Right lobe of liver (tissue), 6 donors: ENCODE measurements at regions of chr1 and their contacts with region 1.

Region 1: DNA sequence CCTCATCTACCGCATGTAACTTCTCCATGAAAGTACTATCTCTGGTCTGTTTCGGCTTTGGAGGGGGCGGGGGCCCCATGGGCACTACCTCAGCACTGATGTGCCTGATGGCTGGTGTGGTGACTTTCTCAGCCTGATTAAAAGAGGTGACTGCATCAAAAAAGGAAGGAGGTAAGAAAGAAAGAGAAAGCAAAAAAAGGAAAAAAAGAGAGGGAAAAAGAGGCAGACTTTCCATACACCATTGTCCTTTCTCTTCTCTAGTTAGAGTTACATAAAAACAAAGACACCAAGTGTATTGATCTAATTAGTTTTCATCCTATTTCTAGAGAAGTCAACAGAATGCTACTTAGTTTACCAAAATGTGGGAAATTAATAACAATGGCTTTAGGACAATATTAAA is 43.3 kb downstream of the GON4L start:
- DNase-seq: no peak
- ATAC-seq: no peak
- H3K4me3 ChIP-seq: no peak overlapping the region
- H3K27ac ChIP-seq: no peak overlapping the region
- H3K4me1 ChIP-seq: no peaks in the 10 kb centered on the region
- H3K27me3 ChIP-seq: no peaks in the 10 kb centered on the region
- CTCF ChIP-seq: no peak
- POLR2A ChIP-seq: no peak

Region 2: GRCh38 chr1:155801149-155801548 is 12.5 kb before region 1 on chr1:
- intact Hi-C with region 1: loop called in 1 of 2 experiments (anchors 2 kb)
- DNase-seq: no peak
- ATAC-seq: no peak
- H3K4me3 ChIP-seq: no peak overlapping the region
- H3K27ac ChIP-seq: no peak overlapping the region
- H3K4me1 ChIP-seq: no peaks in the 10 kb centered on the region
- H3K27me3 ChIP-seq: no peaks in the 10 kb centered on the region
- CTCF ChIP-seq: no peak
- POLR2A ChIP-seq: no peak

Region 3: DNA sequence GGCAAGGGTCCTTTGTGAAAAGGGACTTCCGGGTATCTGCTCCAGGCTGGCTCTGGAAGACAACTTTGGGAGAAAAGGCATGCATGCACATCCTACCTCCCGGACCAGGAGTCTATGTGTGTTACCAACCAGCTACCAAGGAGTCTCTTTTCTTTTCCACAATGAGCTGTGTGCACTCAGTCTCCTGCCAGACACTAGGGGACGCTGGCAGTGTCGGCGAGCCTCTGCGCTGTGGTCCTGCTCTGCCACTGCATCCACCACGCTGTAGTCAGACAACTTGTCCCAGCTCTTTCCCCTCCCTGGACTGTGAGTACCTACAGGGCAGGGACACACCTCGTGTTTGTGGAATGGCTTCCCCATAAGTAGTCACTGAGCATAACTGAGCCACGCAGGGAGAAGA is 212.2 kb after region 1 on chr1:
- intact Hi-C with region 1: no loop called
- DNase-seq: peak in 1 of 3 donors; percentile 40
- ATAC-seq: peak; percentile 67 to 83 (median 75)
- H3K4me3 ChIP-seq: no peak overlapping the region
- H3K27ac ChIP-seq: no peak overlapping the region
- H3K4me1 ChIP-seq: no peaks in the 10 kb centered on the region
- H3K27me3 ChIP-seq: no peaks in the 10 kb centered on the region
- CTCF ChIP-seq: peak; percentile 37 to 44 (median 38)
- POLR2A ChIP-seq: no peak